Caco-2 (cell line): ENCODE measurements at regions of chr1 and their contacts with region 1.

Region 1: DNA sequence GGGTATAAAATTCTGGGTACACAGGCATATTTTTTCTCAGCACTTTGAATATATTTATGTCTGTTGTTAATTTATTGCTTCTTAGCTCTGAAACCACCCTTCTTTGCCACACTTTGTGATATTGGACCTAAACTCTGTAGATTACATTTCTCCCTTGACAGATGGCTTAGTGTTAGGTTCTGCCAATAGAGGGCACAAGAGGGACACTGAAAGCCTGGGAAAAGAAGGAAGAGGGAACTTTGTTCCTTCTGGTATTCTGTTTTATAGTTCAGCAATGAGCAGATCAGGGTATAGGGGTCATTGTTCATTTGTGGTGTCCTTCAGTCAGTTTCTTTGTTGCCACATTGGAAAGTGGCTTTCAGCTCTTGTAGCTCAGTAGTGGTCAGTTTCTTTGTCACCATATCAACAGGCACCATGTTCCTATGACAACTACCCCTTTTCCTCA is 423.5 kb upstream of the PROX1 start:
- DNase-seq: peak in 1 of 2 experiments; percentile 54
- H3K4me3 ChIP-seq: no peak overlapping the region
- H3K4me3 Mint-ChIP-seq: no peak overlapping the region
- H3K27ac Mint-ChIP-seq: no peak overlapping the region
- H3K4me1 ChIP-seq: peaks cover 7% of the 10 kb centered on the region
- H3K4me1 Mint-ChIP-seq: peaks cover 12% of the 10 kb centered on the region
- H3K27me3 ChIP-seq: no peaks in the 10 kb centered on the region
- H3K27me3 Mint-ChIP-seq: no peaks in the 10 kb centered on the region
- CTCF ChIP-seq: peak; percentile 48 to 64

Region 2: DNA sequence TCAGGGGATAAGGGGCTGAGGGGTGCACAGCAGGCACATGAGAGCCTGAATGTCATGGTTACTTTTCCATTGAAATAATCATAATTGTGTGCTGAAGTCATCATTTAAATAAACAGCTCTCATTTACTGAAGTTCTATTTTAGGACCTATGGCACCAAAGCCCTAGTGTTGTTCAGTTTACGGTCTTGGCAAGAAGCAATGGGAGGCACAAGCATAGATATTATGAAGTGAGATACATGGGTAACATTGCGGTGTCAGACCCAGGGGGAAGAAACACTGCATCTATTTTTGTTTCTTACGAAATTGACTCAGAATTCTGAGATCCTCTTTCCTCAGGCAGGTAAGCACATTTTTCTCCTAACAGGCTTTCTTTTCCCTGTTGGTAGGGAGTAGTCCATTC is 14.3 kb before region 1 on chr1:
- CTCF ChIA-PET with region 1: no interaction called
- POLR2A ChIA-PET with region 1: no interaction called
- intact Hi-C with region 1: no loop called
- DNase-seq: no peak
- H3K4me3 ChIP-seq: no peak overlapping the region
- H3K4me3 Mint-ChIP-seq: no peak overlapping the region
- H3K27ac Mint-ChIP-seq: no peak overlapping the region
- H3K4me1 ChIP-seq: no peaks in the 10 kb centered on the region
- H3K4me1 Mint-ChIP-seq: no peaks in the 10 kb centered on the region
- H3K27me3 ChIP-seq: no peaks in the 10 kb centered on the region
- H3K27me3 Mint-ChIP-seq: no peaks in the 10 kb centered on the region
- CTCF ChIP-seq: no peak

Region 3: DNA sequence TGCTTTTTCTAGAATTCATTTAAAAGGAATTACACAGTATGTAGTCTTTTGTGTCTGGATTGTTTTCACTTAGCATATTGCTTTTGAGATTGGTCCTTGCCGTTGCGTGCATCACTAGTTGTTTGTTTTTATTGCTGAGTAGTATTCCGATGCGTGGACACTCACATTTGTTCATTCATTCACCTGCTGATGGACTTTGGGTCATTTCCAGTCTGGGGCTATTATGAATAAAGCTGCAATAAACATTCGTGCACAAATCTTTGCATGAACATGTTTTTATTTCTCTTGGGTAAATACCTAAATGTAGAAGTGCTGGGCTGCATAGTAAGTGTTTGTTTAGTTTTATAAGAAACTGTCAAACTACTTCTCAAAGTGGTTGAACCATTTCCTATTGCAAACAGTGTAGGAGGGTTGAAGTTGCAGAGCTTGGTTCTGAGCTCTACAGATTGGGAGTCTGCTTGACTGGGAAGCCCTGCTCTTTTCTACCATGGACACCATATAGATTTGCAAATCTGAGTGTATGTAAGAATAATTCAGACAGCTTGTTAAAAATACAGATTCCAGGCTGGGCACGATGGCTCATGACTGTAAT is 18.8 kb after region 1 on chr1:
- CTCF ChIA-PET with region 1: no interaction called
- POLR2A ChIA-PET with region 1: no interaction called
- intact Hi-C with region 1: no loop called
- DNase-seq: no peak
- H3K4me3 ChIP-seq: no peak overlapping the region
- H3K4me3 Mint-ChIP-seq: no peak overlapping the region
- H3K27ac Mint-ChIP-seq: no peak overlapping the region
- H3K4me1 ChIP-seq: peaks cover 21% of the 10 kb centered on the region
- H3K4me1 Mint-ChIP-seq: peaks cover 6% of the 10 kb centered on the region
- H3K27me3 ChIP-seq: no peaks in the 10 kb centered on the region
- H3K27me3 Mint-ChIP-seq: no peaks in the 10 kb centered on the region
- CTCF ChIP-seq: no peak

Region 4: GRCh38 chr1:213982672-213983492 is 418.6 kb after region 1 on chr1:
- CTCF ChIA-PET with region 1: no interaction called
- POLR2A ChIA-PET with region 1: no interaction called
- intact Hi-C with region 1: loop called (anchors 2 kb)
- DNase-seq: peak; percentile 66 to 76
- H3K4me3 ChIP-seq: peak overlapping the region; percentile 70
- H3K4me3 Mint-ChIP-seq: peak overlapping the region; percentile 99
- H3K27ac Mint-ChIP-seq: no peak overlapping the region
- H3K4me1 ChIP-seq: peaks cover 25% of the 10 kb centered on the region
- H3K4me1 Mint-ChIP-seq: peaks cover 10% of the 10 kb centered on the region
- H3K27me3 ChIP-seq: no peaks in the 10 kb centered on the region; the same call in 1 of the 2 replicates
- H3K27me3 Mint-ChIP-seq: peaks cover 12% of the 10 kb centered on the region
- CTCF ChIP-seq: peak in 1 of 2 experiments; percentile 55